ENCODE measurements at regions of chr13 and their contacts with region 1.

Region 1: GRCh38 chr13:44274452-44275205 is 99.0 kb upstream of the SERP2 start:
- DNase-seq: peak in 7 of 10 donors; percentile 6 to 86 (median 70)
- ATAC-seq: peak; percentile 92 to 94
- H3K4me3 Mint-ChIP-seq: peak overlapping the region; percentile 57 to 86 (median 78)
- H3K27ac Mint-ChIP-seq: peak overlapping the region; percentile 94 to 99 (median 98)
- H3K4me1 Mint-ChIP-seq: peaks cover 30 to 56% (median 51%) of the 10 kb centered on the region in 4 donors
- H3K27me3 Mint-ChIP-seq: no peaks in the 10 kb centered on the region

Region 2: DNA sequence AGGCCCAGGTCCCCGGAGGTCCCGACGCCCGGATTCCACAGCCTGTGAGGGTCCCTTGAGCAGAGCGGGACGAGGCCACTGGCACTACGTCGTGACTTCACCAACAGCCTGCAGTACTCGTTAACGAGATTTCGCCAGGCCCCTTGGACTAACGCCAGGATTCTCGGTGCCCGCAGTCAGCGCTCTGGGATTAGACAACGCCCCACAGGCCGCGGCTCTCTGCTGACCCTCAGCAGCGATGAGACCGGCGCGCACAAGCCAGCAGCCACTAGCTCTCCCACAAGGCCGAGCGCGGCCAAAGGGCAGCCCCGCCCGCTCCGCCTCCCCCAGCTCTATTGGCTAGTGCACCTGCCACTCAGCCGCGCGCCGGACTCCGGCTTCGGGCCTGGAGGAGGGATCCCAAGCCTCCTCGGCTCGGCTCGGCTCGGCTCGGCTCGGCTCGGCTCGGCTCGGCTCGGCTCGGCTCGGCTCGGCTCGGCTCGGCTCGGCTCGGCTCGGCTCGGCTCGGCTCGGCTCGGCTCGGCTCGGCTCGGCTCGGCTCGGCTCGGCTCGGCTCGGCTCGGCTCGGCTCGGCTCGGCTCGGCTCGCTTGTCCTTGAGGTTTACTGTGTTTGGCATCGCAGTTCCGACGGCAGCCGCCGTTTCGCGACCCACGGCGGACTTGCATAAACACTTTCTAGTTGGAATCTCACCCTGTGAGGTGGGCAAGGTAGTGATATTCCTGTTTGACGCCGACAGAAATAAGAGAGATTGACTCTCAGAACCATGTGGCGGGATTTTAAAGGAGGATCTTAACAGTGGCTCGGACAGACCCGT is 132.7 kb before region 1 on chr13:
- POLR2A ChIA-PET with region 1: interaction called, 11 read pairs
- DNase-seq: peak; percentile 82 to 97 (median 91)
- ATAC-seq: peak; percentile 97
- H3K4me3 Mint-ChIP-seq: peak overlapping the region; percentile 84 to 97 (median 96)
- H3K27ac Mint-ChIP-seq: peak overlapping the region; percentile 68 to 99 (median 98)
- H3K4me1 Mint-ChIP-seq: peaks cover 0 to 31% (median 15%) of the 10 kb centered on the region in 4 donors
- H3K27me3 Mint-ChIP-seq: peaks cover 0 to 5% (median 2%) of the 10 kb centered on the region in 5 donors

Region 3: GRCh38 chr13:44373601-44374348 is 99.1 kb after region 1 on chr13 and contains the start of gene SERP2:
- POLR2A ChIA-PET with region 1: no interaction called
- DNase-seq: peak in 4 of 10 donors; percentile 3 to 13 (median 7)
- ATAC-seq: peak; percentile 16 to 20
- H3K4me3 Mint-ChIP-seq: peak within 1 kb of the TSS; percentile 30 to 78 (median 64)
- H3K27ac Mint-ChIP-seq: peak within 1 kb of the TSS in 5 of 10 donors; percentile 20 to 79 (median 69)
- H3K4me1 Mint-ChIP-seq: peaks cover 0 to 11% (median 3%) of the 10 kb centered on the region in 4 donors
- H3K27me3 Mint-ChIP-seq: peaks cover 16 to 35% (median 20%) of the 10 kb centered on the region in 5 donors
- polyA plus RNA-seq, gene SERP2: 0.34 to 0.49 TPM in 2 of 3 donors, not detected in the other

Region 4: DNA sequence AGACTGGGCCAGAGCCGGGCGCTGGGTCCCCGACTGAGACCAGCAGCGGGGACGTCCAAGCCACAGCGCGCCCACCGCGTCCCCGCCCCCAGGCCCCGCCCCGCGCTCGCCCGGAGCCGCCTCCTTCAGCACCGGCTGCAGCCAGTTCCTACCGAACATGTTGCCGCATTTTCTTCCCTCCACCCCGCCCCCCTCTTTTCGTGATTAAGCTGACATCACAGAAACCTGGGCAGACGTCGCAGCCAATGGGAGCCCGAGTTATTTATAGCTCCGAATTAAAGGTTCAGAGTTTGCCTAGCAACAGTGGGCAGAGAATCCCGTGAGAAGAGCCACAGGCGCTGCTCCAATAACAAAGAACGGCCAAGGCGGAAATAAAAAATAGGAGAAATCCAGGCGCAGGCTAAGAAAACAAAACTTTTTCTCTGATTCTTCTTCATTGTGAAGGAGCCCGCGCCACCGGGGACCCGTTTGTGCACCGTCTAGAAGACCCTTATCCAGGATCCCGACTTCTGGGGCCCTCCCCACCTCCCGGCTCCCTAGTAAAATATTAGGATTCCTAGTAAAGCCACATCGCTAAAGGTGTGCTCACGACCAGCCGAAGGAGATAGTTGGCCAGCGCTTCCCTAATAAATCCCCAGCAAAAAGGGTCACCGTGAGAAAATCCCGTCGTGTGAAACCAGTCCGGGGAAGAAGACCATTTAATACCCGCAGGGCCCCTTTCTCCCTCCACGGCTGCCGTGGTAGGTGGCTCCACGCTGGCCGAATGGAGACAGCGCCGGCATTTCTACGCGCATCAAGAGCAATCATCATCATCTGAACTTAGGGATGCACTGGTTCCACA is 160.7 kb after region 1 on chr13:
- POLR2A ChIA-PET with region 1: interaction called, 10 read pairs
- DNase-seq: peak; percentile 76 to 94 (median 84)
- ATAC-seq: peak; percentile 83 to 86
- H3K4me3 Mint-ChIP-seq: peak overlapping the region; percentile 79 to 92 (median 90)
- H3K27ac Mint-ChIP-seq: peak overlapping the region; percentile 58 to 93 (median 85)
- H3K4me1 Mint-ChIP-seq: peaks cover 11 to 38% (median 31%) of the 10 kb centered on the region in 4 donors
- H3K27me3 Mint-ChIP-seq: peaks cover 0 to 8% (median 0%) of the 10 kb centered on the region in 5 donors